Endothelial cell of umbilical vein (primary cell): ENCODE measurements at regions of chrX and their contacts with region 1.

Region 1: DNA sequence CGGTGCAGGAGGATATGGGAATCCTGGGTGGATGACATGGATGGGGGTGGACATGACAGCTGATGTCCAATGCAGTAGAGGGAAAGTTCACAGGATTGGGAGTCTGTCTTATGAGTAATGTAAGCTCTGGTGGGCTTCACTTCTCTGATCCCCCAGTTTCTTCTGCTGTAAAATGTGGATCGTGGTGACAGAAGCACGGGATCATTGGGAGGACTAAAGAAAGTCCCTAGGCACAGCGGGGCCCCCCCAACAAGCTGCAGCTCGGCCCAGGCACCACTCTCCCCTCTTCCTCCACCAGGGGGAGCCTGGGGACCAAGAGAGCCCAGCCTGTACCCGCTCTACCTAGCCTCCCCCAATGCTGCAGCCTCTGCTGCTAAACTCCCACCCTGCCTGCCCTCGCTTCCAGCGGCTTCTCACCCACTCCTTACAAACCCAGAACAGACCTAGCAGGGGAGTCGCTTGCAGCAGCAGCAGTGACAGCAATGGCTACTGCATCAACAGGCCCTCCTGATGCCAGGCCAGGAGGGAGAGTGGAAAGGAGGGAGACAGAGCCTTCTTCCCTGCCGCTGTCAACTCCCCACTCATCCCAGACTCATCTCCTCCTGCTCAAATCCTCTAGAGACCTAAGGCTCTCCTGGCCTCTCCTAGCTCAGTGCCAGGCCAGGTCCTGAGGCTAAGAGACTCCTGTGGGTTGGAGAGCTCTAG is 36.1 kb upstream of the IQSEC2 start:
- DNase-seq: peak; percentile 27
- H3K4me3 ChIP-seq: no peak overlapping the region
- H3K27ac ChIP-seq: no peak overlapping the region
- H3K4me1 ChIP-seq: peaks cover 13% of the 10 kb centered on the region
- H3K27me3 ChIP-seq: peaks cover 34% of the 10 kb centered on the region in 2 experiments
- CTCF ChIP-seq: peak; percentile 51 to 84
- POLR2A ChIP-seq: no peak

Region 2: DNA sequence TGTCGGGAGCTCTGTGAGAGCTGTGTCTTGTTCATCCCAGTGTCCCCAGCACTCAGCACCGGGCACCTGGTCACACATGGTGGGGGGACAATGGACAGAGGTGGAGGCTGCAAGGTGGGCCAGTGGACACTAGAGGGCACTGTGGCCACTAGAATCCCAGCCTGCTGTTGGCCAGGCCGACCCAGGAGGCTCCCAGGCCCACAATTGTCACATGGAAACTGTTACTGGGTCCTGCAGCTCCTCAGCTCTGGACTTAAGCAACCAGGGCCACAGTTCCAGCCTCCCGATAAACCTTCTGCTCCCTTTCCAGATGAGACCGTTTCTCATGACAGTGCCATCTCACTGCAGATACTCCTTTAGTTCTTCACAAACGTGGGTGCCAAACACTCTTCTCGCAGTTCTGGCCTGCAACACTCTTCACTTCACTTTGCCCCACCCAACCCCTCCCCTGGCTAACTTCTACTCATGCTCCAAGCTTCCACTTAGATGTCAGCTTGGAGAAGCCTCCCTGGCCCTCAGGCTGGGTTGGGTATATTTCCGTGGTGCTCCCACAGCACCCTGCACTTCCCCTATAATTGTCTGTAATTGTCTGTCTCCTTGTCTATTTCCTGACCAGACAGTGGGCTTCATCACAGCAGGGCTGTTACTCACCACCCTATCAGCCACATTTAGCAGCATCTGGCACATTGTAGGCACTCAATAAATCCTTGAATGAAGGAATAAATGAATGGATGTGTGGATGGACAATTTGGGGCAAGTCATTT is 32.7 kb before region 1 on chrX:
- CTCF ChIA-PET with region 1: interaction called, 45 read pairs
- POLR2A ChIA-PET with region 1: no interaction called
- dilution Hi-C with region 1: no loop called
- intact Hi-C with region 1: no loop called
- DNase-seq: peak; percentile 35
- H3K4me3 ChIP-seq: no peak overlapping the region
- H3K27ac ChIP-seq: no peak overlapping the region
- H3K4me1 ChIP-seq: peaks cover 19% of the 10 kb centered on the region
- H3K27me3 ChIP-seq: no peaks in the 10 kb centered on the region
- CTCF ChIP-seq: peak; percentile 66 to 78
- POLR2A ChIP-seq: no peak

Region 3: GRCh38 chrX:53330331-53330730 is 12.8 kb after region 1 on chrX:
- CTCF ChIA-PET with region 1: interaction called, 208 read pairs
- POLR2A ChIA-PET with region 1: no interaction called
- dilution Hi-C with region 1: no loop called
- intact Hi-C with region 1: loop called (anchors 1 kb)
- DNase-seq: no peak
- H3K4me3 ChIP-seq: no peak overlapping the region
- H3K27ac ChIP-seq: no peak overlapping the region
- H3K4me1 ChIP-seq: peaks cover 16% of the 10 kb centered on the region
- H3K27me3 ChIP-seq: peaks cover 3 to 10% of the 10 kb centered on the region in 2 experiments
- CTCF ChIP-seq: no peak
- POLR2A ChIP-seq: no peak

Region 4: GRCh38 chrX:53347948-53348347 is 30.4 kb after region 1 on chrX:
- CTCF ChIA-PET with region 1: no interaction called
- POLR2A ChIA-PET with region 1: no interaction called
- dilution Hi-C with region 1: no loop called
- intact Hi-C with region 1: no loop called
- DNase-seq: no peak
- H3K4me3 ChIP-seq: no peak overlapping the region
- H3K27ac ChIP-seq: no peak overlapping the region
- H3K4me1 ChIP-seq: no peaks in the 10 kb centered on the region
- H3K27me3 ChIP-seq: no peaks in the 10 kb centered on the region
- CTCF ChIP-seq: no peak
- POLR2A ChIP-seq: no peak

Region 5: DNA sequence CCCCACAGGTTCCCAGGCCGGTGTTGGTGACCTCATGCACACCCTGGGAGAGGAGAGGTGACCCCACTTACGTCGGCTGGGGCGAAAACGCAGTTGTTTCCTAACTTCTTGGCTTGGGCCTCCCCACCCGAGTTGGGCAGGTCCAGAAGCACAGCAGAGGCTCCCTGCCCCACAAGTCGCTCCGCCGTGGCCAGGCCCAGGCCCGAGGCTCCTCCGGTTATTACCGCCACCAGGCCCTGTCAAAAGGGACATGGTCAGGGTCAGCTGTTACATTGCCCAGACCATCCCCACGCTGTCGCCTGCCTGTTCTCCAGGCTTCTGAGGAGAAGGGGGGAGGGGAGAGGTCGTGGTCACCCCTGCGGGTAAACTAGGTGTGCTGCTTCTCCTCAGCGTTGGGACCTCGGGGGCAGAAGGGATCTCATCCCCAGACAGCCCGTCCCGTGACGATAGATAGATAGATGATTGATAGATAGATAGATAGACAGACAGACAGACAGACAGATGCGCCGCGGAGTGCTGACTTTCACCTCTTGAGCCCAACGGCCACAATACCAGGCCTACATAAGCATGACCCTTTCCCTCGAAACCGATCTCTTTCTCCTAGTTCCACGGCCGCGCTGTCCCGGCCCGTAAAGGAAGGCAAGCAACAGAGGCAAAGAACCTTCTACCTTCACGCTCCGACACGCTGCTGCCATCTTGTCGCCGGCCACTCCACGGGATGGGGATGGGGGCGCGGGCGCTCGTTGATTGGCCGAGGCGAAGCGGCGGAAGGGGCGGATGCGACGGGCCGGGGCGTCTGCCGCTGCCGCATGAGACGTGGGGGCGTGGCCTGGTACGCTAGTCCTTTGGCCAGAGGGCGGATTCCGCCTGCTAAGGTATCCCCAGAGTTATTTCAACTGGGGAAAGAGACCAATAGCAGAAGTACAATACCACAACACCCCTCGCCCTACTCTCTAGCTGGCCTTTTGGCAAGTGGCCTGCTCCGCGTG is 116.4 kb after region 1 on chrX and contains the start of gene HSD17B10:
- CTCF ChIA-PET with region 1: interaction called, 21 read pairs
- POLR2A ChIA-PET with region 1: no interaction called
- dilution Hi-C with region 1: no loop called
- intact Hi-C with region 1: no loop called
- DNase-seq: peak; percentile 81
- H3K4me3 ChIP-seq: peak within 1 kb of the TSS; percentile 44 to 82 (median 52)
- H3K27ac ChIP-seq: peak within 1 kb of the TSS; percentile 51
- H3K4me1 ChIP-seq: peaks cover 2% of the 10 kb centered on the region
- H3K27me3 ChIP-seq: no peaks in the 10 kb centered on the region
- CTCF ChIP-seq: no peak
- POLR2A ChIP-seq: peak; percentile 76
- total RNA-seq, gene HSD17B10: 81.4 and 82.3 TPM in 2 replicates

Region 6: GRCh38 chrX:53481816-53482465 is 164.4 kb after region 1 on chrX:
- CTCF ChIA-PET with region 1: interaction called, 48 read pairs
- POLR2A ChIA-PET with region 1: no interaction called
- dilution Hi-C with region 1: no loop called
- intact Hi-C with region 1: loop called (anchors 1 kb)
- DNase-seq: peak; percentile 49
- H3K4me3 ChIP-seq: no peak overlapping the region
- H3K27ac ChIP-seq: no peak overlapping the region
- H3K4me1 ChIP-seq: no peaks in the 10 kb centered on the region
- H3K27me3 ChIP-seq: peaks cover 0 to 2% of the 10 kb centered on the region in 2 experiments
- CTCF ChIP-seq: peak; percentile 54 to 69
- POLR2A ChIP-seq: no peak